ENCODE measurements at regions of chr10 and their contacts with region 1.

Region 1: DNA sequence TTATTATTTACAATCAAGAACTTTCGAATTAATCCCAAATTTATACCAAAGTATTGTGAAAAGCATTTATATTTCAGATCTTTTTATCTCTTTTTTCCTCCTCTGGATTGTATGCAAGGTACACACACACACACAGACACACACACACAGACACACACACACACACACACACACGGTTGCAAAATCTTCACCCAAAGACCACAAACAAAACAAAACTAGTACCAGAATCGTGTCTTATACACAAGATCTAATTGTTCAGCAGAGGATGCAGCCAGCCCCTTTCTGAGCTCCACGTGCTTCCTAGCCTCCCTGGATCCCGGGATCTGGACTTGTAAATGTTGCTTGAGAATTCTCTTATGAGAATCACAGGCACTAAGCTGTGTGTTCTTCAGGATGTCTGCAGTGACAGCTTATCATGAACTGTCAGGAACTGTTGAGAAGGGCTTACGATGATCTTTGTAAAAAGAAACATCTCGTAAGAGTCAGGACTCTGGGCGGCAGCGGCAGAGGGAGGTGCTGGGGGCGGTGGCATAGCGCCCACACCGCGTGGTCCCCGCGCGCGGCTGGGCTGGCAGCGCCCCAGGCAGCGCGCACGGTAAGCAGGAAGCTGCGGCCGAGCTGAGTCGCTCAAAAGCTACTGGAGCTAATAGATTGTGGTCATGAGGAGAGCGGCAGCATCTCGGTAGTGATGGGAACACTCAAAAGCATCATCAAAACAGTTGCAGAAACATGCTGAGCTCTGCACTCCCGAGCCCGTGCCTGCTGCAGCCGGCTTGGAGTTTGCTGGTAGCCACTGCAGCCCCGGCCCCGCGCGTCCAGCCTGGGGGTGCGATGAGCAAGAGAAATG is 277.6 kb downstream of the GATA3 start:
- DNase-seq: peak; percentile 74 to 97 (median 91)
- ATAC-seq: peak; percentile 94 to 98 (median 96)
- H3K4me3 ChIP-seq: peak overlapping the region; percentile 62 to 63
- H3K4me3 Mint-ChIP-seq: peak overlapping the region; percentile 77 to 80 (median 79)
- H3K27ac ChIP-seq: peak overlapping the region; percentile 97
- H3K27ac Mint-ChIP-seq: peak overlapping the region; percentile 87 to 96
- H3K4me1 ChIP-seq: peaks cover 11 to 24% of the 10 kb centered on the region in 2 experiments
- H3K4me1 Mint-ChIP-seq: peaks cover 31 to 44% (median 42%) of the 10 kb centered on the region in 3 donors
- H3K27me3 ChIP-seq: no peaks in the 10 kb centered on the region
- H3K27me3 Mint-ChIP-seq: no peaks in the 10 kb centered on the region

Region 2: GRCh38 chr10:8053446-8054290 is 278.4 kb before region 1 on chr10:
- CTCF ChIA-PET with region 1: interaction called in 1 of 2 experiments, 5 read pairs
- POLR2A ChIA-PET with region 1: interaction called in 1 of 2 experiments, 11 read pairs
- DNase-seq: peak; percentile 71 to 96 (median 89)
- ATAC-seq: peak; percentile 63 to 80 (median 75)
- H3K4me3 ChIP-seq: peak overlapping the region; percentile 63 to 85
- H3K4me3 Mint-ChIP-seq: peak overlapping the region; percentile 92 to 96 (median 92)
- H3K27ac ChIP-seq: peak overlapping the region; percentile 67
- H3K27ac Mint-ChIP-seq: peak overlapping the region; percentile 93 to 94
- H3K4me1 ChIP-seq: peaks cover 19 to 69% of the 10 kb centered on the region in 2 experiments
- H3K4me1 Mint-ChIP-seq: peaks cover 41 to 54% (median 49%) of the 10 kb centered on the region in 3 donors
- H3K27me3 ChIP-seq: peaks cover 4 to 45% of the 10 kb centered on the region in 2 experiments
- H3K27me3 Mint-ChIP-seq: peaks cover 16 to 23% of the 10 kb centered on the region in 2 donors

Region 3: DNA sequence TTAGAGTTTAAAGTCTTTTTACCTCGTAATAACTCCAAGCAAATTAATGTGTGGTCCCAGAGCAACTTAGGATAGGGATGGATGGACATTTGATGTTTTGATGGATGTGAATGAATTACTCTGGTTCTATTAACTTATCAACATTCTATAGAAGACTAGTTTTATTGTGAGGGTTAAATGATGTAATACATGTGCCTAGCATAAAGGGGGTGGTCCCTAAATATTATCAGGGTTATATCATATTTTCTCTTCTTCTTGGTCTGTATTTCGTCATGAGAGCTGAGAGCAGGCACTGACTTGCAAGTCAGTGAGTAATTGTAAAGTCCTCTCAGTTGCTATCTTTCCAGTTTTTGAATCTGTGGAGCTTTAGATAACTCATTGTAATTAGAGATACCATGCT is 58.4 kb before region 1 on chr10:
- CTCF ChIA-PET with region 1: no interaction called
- POLR2A ChIA-PET with region 1: no interaction called
- DNase-seq: no peak
- ATAC-seq: no peak
- H3K4me3 ChIP-seq: no peak overlapping the region
- H3K4me3 Mint-ChIP-seq: no peak overlapping the region
- H3K27ac ChIP-seq: no peak overlapping the region
- H3K27ac Mint-ChIP-seq: no peak overlapping the region
- H3K4me1 ChIP-seq: no peaks in the 10 kb centered on the region
- H3K4me1 Mint-ChIP-seq: no peaks in the 10 kb centered on the region
- H3K27me3 ChIP-seq: no peaks in the 10 kb centered on the region
- H3K27me3 Mint-ChIP-seq: no peaks in the 10 kb centered on the region

Region 4: GRCh38 chr10:8288600-8288999 is 43.5 kb before region 1 on chr10:
- CTCF ChIA-PET with region 1: no interaction called
- POLR2A ChIA-PET with region 1: no interaction called
- DNase-seq: no peak
- ATAC-seq: no peak
- H3K4me3 ChIP-seq: no peak overlapping the region
- H3K4me3 Mint-ChIP-seq: no peak overlapping the region
- H3K27ac ChIP-seq: no peak overlapping the region
- H3K27ac Mint-ChIP-seq: no peak overlapping the region
- H3K4me1 ChIP-seq: no peaks in the 10 kb centered on the region
- H3K4me1 Mint-ChIP-seq: no peaks in the 10 kb centered on the region
- H3K27me3 ChIP-seq: no peaks in the 10 kb centered on the region
- H3K27me3 Mint-ChIP-seq: no peaks in the 10 kb centered on the region

Region 5: DNA sequence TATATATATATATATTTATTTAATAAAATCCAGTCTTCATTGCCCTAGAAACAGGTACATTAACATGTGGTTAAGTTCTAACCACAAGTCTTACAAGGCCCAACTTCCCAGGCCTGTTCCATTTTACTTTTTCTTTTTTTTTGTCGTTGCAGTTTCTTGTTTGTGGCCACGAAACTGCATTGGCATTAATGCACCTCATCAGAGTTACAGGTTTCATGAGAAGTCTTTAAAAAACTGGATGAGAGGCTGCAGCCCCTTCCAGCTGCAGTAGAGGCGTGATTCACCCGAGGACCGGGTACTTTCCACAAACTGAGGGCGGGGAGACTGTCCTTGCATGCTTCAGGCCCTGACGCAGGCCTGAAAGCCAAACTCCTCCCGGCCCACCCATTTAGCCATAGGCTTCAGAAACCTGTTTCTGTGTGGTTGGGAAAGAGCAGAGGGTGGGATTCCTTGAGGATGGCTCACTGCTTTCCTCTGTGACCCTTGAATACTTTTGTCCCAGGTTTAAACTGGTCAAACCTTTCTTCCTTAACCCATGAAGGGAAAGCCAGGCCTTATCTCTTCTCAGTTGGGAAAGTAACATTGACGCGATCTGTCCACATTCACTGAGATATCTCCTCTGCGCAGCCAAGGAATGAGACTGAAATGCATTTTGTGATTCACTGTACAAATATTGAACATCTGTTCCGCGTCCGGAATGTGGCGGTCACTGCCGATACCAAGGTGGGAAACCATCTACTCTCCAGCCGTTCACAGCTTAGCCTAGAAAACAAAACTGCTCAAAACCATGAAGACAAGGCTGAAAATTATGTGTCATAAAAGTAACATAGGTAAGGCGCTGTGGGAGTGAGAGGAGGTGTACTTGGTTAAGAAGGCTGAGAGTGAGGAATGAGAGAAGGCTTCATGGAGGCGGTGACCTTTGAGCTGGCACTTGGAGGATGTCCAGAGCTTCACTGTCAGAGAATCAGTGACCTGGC is 34.1 kb after region 1 on chr10:
- CTCF ChIA-PET with region 1: interaction called in 1 of 2 experiments, 3 read pairs
- POLR2A ChIA-PET with region 1: interaction called, 3 to 17 read pairs
- DNase-seq: peak in 32 of 35 experiments; percentile 4 to 76 (median 36)
- ATAC-seq: peak; percentile 48 to 90 (median 54)
- H3K4me3 ChIP-seq: no peak overlapping the region
- H3K4me3 Mint-ChIP-seq: peak overlapping the region in 1 of 3 donors; percentile 22
- H3K27ac ChIP-seq: peak overlapping the region; percentile 47
- H3K27ac Mint-ChIP-seq: peak overlapping the region; percentile 46 to 82
- H3K4me1 ChIP-seq: peaks cover 2 to 30% of the 10 kb centered on the region in 2 experiments
- H3K4me1 Mint-ChIP-seq: peaks cover 26 to 55% (median 37%) of the 10 kb centered on the region in 3 donors
- H3K27me3 ChIP-seq: no peaks in the 10 kb centered on the region
- H3K27me3 Mint-ChIP-seq: no peaks in the 10 kb centered on the region

Region 6: GRCh38 chr10:8404391-8405120 is 72.5 kb after region 1 on chr10:
- CTCF ChIA-PET with region 1: interaction called in 1 of 2 experiments, 23 read pairs
- POLR2A ChIA-PET with region 1: interaction called, 7 to 37 read pairs
- DNase-seq: peak in 31 of 35 experiments; percentile 11 to 91 (median 43)
- ATAC-seq: peak; percentile 62 to 87 (median 70)
- H3K4me3 ChIP-seq: peak overlapping the region in 1 of 2 donors; percentile 14
- H3K4me3 Mint-ChIP-seq: peak overlapping the region; percentile 55 to 74 (median 68)
- H3K27ac ChIP-seq: peak overlapping the region; percentile 96
- H3K27ac Mint-ChIP-seq: peak overlapping the region; percentile 86 to 93
- H3K4me1 ChIP-seq: peaks cover 49 to 58% of the 10 kb centered on the region in 2 experiments
- H3K4me1 Mint-ChIP-seq: peaks cover 73 to 83% (median 79%) of the 10 kb centered on the region in 3 donors
- H3K27me3 ChIP-seq: no peaks in the 10 kb centered on the region
- H3K27me3 Mint-ChIP-seq: no peaks in the 10 kb centered on the region

Region 7: DNA sequence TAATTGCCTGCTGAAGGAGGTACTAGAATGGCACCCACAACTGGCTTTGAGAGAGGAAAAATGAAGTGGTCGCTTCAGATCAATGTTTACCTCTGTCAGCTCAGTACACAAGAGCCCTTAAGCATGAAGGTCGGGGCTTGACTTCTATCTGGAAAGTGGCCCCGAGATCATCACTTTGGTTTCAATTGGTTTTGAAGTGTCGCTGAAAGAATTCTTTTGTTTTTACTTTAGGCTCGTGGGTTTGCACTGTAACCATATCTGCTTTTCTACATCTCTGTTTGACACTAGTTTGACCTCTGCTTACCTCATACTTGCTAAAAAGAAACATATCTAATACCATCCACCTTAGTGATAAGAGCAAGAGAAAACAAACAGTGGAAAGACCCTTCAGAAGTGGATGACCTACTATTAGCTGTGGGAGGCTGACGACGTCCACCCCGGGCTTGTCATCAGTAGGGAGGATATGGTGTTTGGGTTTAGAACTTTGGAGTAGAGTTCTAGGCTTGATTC is 84.1 kb after region 1 on chr10:
- CTCF ChIA-PET with region 1: interaction called in 1 of 2 experiments, 11 read pairs
- POLR2A ChIA-PET with region 1: interaction called, 5 to 48 read pairs
- DNase-seq: peak in 32 of 35 experiments; percentile 16 to 77 (median 51)
- ATAC-seq: peak; percentile 71 to 89 (median 76)
- H3K4me3 ChIP-seq: no peak overlapping the region
- H3K4me3 Mint-ChIP-seq: peak overlapping the region in 1 of 3 donors; percentile 40
- H3K27ac ChIP-seq: peak overlapping the region; percentile 94
- H3K27ac Mint-ChIP-seq: peak overlapping the region; percentile 90 to 94
- H3K4me1 ChIP-seq: peaks cover 6 to 17% of the 10 kb centered on the region in 2 experiments
- H3K4me1 Mint-ChIP-seq: peaks cover 28 to 40% (median 31%) of the 10 kb centered on the region in 3 donors
- H3K27me3 ChIP-seq: no peaks in the 10 kb centered on the region
- H3K27me3 Mint-ChIP-seq: no peaks in the 10 kb centered on the region

Region 8: DNA sequence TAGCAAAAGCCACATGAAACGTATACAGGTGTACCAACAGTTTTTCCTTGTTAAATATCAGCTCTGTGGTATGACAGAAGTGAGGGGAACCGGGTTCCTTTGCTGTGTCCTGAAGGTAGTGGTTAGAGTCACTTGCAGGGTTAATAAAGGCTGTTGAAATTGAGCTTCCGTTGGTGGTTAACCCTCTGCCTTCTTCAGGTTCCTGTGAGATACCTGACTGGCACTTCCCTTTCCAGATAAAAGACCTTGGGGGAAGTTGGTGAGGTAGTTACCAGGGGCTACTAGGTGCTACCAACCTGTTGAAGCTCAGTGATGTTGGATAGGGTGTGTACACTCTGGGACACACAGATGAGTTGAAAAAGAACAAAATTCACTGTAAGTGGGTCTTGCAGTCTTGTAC is 106.5 kb after region 1 on chr10:
- CTCF ChIA-PET with region 1: interaction called in 1 of 2 experiments, 6 read pairs
- POLR2A ChIA-PET with region 1: interaction called, 4 to 11 read pairs
- DNase-seq: peak in 25 of 35 experiments; percentile 5 to 54 (median 20)
- ATAC-seq: peak; percentile 66 to 92 (median 83)
- H3K4me3 ChIP-seq: no peak overlapping the region
- H3K4me3 Mint-ChIP-seq: peak overlapping the region in 1 of 3 donors; percentile 55
- H3K27ac ChIP-seq: no peak overlapping the region
- H3K27ac Mint-ChIP-seq: peak overlapping the region in 1 of 2 donors; percentile 6
- H3K4me1 ChIP-seq: peaks cover 12 to 17% of the 10 kb centered on the region in 2 experiments
- H3K4me1 Mint-ChIP-seq: peaks cover 28 to 33% (median 32%) of the 10 kb centered on the region in 3 donors
- H3K27me3 ChIP-seq: no peaks in the 10 kb centered on the region
- H3K27me3 Mint-ChIP-seq: peaks cover 0 to 2% of the 10 kb centered on the region in 2 donors